ENCODE measurements at regions of chr3 and their contacts with region 1.

Region 1: GRCh38 chr3:70805061-70805759 is 492.8 kb upstream of the MDFIC2 start:
- DNase-seq: peak; percentile 74
- ATAC-seq: peak; percentile 56
- H3K4me3 ChIP-seq: peak overlapping the region; percentile 61
- H3K27ac ChIP-seq: peak overlapping the region; percentile 88
- H3K4me1 ChIP-seq: peaks cover 48% of the 10 kb centered on the region
- H3K27me3 ChIP-seq: no peaks in the 10 kb centered on the region
- CTCF ChIP-seq: peak; percentile 49; the same call in 1 of the 2 replicates

Region 2: GRCh38 chr3:70726961-70727360 is 78.2 kb before region 1 on chr3:
- CTCF ChIA-PET with region 1: no interaction called
- POLR2A ChIA-PET with region 1: no interaction called
- intact Hi-C with region 1: loop called (anchors 1 kb)
- DNase-seq: peak; percentile 22
- ATAC-seq: peak; percentile 40; the same call in 1 of the 2 replicates
- H3K4me3 ChIP-seq: no peak overlapping the region
- H3K27ac ChIP-seq: no peak overlapping the region
- H3K4me1 ChIP-seq: peaks cover 15% of the 10 kb centered on the region; the same call in 1 of the 2 replicates
- H3K27me3 ChIP-seq: no peaks in the 10 kb centered on the region
- CTCF ChIP-seq: no peak

Region 3: DNA sequence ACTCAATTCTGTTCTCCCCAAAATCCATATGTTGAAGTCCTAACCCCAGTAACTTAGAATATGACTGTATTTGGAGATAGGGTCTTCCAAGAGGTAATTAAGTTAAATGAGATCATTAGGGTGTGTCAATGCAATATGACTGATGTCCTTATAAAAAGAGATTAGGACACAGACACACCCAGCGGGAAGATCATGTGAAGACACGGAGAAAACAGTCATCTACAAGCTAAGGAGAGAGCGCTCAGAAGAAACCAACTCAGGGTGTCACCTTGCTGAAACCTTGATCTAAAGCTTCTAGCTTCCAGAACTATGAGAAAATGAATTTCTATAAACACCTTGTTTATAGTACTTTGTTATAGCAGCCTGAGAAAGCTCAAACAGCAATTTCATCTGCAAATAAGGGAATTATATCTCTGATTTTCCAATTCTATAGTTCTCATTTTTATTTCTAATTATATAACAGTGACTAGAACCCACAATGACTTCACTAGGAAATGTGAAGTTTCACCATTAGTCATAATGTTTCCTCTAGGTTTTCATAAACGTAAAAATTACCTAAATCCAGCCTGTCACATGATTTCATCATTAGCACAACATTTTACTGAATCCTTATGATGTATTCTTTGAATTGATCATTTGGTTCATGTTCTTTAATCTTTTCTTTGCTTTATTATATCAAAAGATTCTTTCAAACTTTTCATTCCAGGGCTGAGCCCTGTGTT is 33.6 kb before region 1 on chr3:
- CTCF ChIA-PET with region 1: no interaction called
- POLR2A ChIA-PET with region 1: no interaction called
- intact Hi-C with region 1: loop called (anchors 1 kb)
- DNase-seq: peak; percentile 47
- ATAC-seq: peak; percentile 90
- H3K4me3 ChIP-seq: no peak overlapping the region
- H3K27ac ChIP-seq: peak overlapping the region; percentile 63
- H3K4me1 ChIP-seq: peaks cover 21% of the 10 kb centered on the region
- H3K27me3 ChIP-seq: no peaks in the 10 kb centered on the region
- CTCF ChIP-seq: no peak

Region 4: GRCh38 chr3:70849911-70850699 is 44.9 kb after region 1 on chr3:
- CTCF ChIA-PET with region 1: no interaction called
- POLR2A ChIA-PET with region 1: no interaction called
- intact Hi-C with region 1: loop called (anchors 1 kb)
- DNase-seq: peak; percentile 98
- ATAC-seq: peak; percentile 97
- H3K4me3 ChIP-seq: peak overlapping the region; percentile 19; the same call in 1 of the 2 replicates
- H3K27ac ChIP-seq: peak overlapping the region; percentile 81
- H3K4me1 ChIP-seq: peaks cover 35% of the 10 kb centered on the region
- H3K27me3 ChIP-seq: no peaks in the 10 kb centered on the region
- CTCF ChIP-seq: no peak

Region 5: DNA sequence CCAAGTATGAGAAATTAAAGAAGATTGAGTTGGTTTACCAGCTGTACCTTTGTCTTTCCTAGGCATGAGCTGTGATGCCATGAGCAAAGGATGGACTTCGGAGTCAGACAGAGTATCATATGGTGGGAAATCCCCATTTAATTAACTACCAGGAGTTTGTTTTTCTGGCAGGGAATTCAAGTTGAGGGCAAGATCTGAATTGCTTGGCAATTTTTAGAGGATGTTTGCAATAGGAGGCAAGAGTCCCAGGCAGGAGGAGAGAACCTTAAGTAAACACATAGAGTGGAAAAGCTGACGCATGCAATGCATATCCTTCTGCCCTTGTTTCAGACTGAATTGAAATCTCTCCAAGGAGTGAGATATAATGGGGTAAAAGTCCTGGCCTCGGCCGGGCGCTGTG is 76.9 kb after region 1 on chr3:
- CTCF ChIA-PET with region 1: no interaction called
- POLR2A ChIA-PET with region 1: no interaction called
- intact Hi-C with region 1: no loop called
- DNase-seq: peak; percentile 25
- ATAC-seq: no peak
- H3K4me3 ChIP-seq: no peak overlapping the region
- H3K27ac ChIP-seq: no peak overlapping the region
- H3K4me1 ChIP-seq: no peaks in the 10 kb centered on the region
- H3K27me3 ChIP-seq: no peaks in the 10 kb centered on the region
- CTCF ChIP-seq: no peak